Activated CD8-positive, alpha-beta T cell treated with anti-CD3 and anti-CD28 coated beads, Interleukin-2, amount 10 ng/mL, durations not matched to agents 7 days and 5 days (primary cell): ENCODE measurements at regions of chr10 and their contacts with region 1.

Region 1: DNA sequence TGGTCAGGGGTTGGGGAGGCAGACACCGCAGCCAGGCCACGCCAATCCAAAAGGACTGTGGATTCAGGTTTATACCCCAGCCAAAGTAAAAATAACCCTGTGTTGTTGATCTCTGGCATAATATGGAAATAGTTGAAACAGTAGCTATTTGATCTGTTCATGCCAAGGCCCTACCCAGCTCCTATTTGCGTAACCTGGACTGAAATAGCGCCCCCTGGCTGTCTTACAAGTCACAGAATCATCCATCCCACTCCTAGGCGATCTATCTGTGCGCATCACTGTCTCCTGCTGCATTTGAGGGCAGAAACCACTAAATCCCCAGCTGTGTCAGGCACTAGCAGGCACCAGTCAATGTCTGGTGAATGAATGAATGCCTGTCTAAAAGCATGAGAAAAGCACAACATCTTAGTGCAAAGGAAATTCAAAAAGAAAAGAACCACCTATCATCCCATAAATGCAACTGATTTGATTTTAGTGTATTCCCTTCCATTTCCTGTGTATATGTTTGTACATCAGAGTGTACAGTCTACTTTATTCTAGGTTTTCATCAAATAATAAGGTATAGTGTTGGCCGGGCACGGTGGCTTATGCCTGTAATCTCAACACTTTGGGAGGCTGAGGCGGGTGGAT is 160.0 kb downstream of the SLIT1 start:
- DNase-seq: peak; percentile 76
- ATAC-seq: peak; percentile 70
- H3K4me3 Mint-ChIP-seq: no peak overlapping the region
- H3K27ac Mint-ChIP-seq: no peak overlapping the region
- H3K4me1 Mint-ChIP-seq: peaks cover 7% of the 10 kb centered on the region
- H3K27me3 Mint-ChIP-seq: peaks cover 9% of the 10 kb centered on the region

Region 2: DNA sequence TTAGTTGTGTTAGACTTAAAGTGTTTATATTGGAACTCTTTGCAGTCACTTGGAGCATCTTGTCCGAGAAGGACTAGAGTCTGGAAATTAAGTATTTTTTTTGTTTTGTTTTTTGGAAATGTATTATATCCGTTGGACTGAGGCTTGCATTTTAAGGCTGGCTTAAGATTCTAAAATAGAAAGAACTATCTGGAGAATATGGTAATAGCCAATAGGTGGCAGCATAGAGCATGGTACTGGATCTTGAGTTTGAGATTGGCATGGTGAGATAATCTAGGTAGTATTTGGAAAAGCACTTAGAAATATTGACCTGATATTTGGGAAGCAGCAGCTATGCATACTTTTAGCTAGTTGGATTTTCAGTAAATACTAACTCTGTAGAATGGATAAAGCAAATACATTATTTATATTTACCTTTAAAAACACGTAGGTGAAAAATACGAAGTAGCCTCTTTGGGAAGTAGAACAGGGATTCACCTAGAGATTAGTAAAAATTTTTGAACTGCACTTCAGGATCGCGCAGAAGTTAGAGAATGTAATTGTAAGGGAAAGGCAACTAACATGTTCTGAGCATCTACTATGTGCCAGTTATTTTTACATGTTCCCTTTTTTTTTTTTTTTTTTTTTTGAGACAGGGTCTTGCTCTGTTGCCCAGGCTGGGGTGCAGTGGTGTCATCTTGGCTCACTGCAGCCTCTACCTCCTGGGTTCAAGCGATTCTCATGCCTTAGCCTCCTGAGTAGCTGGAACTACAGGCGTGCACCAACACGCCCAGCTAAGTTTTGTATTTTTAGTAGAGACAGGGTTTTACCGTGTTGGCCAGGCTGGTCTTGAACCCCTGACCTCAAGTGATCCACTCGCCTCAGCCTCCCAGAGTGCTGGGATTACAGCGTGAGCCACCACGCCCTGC is 115.0 kb before region 1 on chr10:
- CTCF ChIA-PET with region 1: interaction called, 49 read pairs
- POLR2A ChIA-PET with region 1: no interaction called
- DNase-seq: peak; percentile 48
- ATAC-seq: no peak
- H3K4me3 Mint-ChIP-seq: no peak overlapping the region
- H3K27ac Mint-ChIP-seq: no peak overlapping the region
- H3K4me1 Mint-ChIP-seq: peaks cover 11% of the 10 kb centered on the region
- H3K27me3 Mint-ChIP-seq: no peaks in the 10 kb centered on the region

Region 3: DNA sequence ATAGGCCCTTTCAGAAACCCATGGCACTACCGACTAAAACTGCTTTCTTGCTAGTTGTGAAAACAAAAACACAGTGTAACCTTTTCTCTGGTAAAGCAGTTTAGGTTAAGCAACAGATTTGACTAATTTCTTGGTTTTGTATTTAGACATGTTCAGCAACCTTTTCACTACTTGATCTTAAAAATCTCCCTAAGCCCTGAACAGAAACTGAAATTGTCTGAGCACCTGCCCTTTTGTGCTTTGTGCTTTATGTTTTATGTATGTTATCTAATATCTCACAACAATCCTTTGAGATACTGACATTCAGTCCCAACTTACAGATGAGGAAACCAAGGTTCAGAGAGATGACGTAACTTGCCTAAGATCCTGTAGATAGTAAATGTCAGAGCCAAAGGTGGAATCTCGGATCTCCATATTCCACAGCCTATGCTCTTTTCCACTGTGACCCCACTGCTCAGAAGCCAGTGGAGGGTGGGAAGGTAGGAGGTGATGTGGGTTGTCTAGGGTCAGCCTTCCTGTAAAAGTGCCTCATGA is 47.0 kb before region 1 on chr10:
- CTCF ChIA-PET with region 1: interaction called, 14 read pairs
- POLR2A ChIA-PET with region 1: no interaction called
- DNase-seq: no peak
- ATAC-seq: no peak
- H3K4me3 Mint-ChIP-seq: no peak overlapping the region
- H3K27ac Mint-ChIP-seq: no peak overlapping the region
- H3K4me1 Mint-ChIP-seq: peaks cover 14% of the 10 kb centered on the region
- H3K27me3 Mint-ChIP-seq: no peaks in the 10 kb centered on the region

Region 4: GRCh38 chr10:96984541-96985131 is 41.1 kb before region 1 on chr10:
- CTCF ChIA-PET with region 1: interaction called, 20 read pairs
- POLR2A ChIA-PET with region 1: no interaction called
- DNase-seq: peak; percentile 29
- ATAC-seq: peak; percentile 73
- H3K4me3 Mint-ChIP-seq: peak overlapping the region; percentile 51
- H3K27ac Mint-ChIP-seq: peak overlapping the region; percentile 22
- H3K4me1 Mint-ChIP-seq: peaks cover 11% of the 10 kb centered on the region
- H3K27me3 Mint-ChIP-seq: no peaks in the 10 kb centered on the region